ENCODE measurements at regions of chr1 and their contacts with region 1.

Region 1: GRCh38 chr1:169161496-169162194 is 55.2 kb downstream of the ATP1B1 start:
- DNase-seq: no peak
- H3K4me3 Mint-ChIP-seq: no peak overlapping the region
- H3K27ac Mint-ChIP-seq: no peak overlapping the region
- H3K4me1 Mint-ChIP-seq: peaks cover 8% of the 10 kb centered on the region
- H3K27me3 Mint-ChIP-seq: no peaks in the 10 kb centered on the region

Region 2: DNA sequence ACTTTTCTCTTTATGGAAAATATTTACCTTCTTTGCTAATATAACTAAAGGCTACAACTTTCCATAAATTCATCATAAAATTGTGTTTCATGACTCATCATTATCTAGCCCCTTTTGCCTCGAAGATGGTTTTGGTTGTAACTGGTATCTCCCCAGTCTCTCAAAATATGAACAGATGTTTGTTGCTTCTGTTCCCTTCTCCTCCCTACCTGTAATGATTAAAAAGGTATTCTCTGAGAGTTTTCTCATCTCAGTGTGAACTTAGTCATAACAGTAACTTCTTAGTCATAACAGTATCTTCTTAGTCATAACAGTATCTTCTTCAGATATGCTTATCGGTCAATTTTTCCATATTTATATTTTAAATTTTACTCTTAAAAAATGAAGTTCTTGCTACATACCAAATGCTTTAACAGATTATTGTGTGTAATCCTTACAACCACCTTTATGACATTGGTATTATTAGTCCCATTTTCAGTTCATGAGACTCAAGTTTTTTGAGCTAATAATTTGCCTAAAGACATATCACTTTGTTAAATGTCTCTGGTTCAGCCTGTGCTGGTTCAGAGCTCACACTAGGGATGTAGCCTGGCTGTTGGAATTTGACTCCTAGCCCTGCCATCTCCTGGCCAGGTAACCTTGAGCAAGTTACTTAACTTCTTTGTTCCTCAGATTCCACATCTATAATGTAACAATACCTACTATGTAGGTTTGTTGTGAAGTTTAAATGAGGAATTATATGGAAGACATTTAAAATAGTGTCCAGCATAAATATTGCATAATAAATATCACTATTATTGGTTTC is 22.6 kb before region 1 on chr1:
- CTCF ChIA-PET with region 1: no interaction called
- POLR2A ChIA-PET with region 1: no interaction called
- intact Hi-C with region 1: loop called (anchors 1 kb)
- DNase-seq: no peak
- H3K4me3 Mint-ChIP-seq: no peak overlapping the region
- H3K27ac Mint-ChIP-seq: peak overlapping the region; percentile 14
- H3K4me1 Mint-ChIP-seq: peaks cover 4% of the 10 kb centered on the region
- H3K27me3 Mint-ChIP-seq: no peaks in the 10 kb centered on the region